ENCODE measurements at regions of chr15 and their contacts with region 1.

Region 1: GRCh38 chr15:65032801-65033537 is 3.5 kb upstream of the MTFMT start:
- DNase-seq: no peak
- ATAC-seq: peak; percentile 56

Region 2: GRCh38 chr15:65083262-65083701 is 50.3 kb after region 1 on chr15:
- intact Hi-C with region 1: loop called (anchors 2 kb)
- DNase-seq: no peak
- ATAC-seq: no peak

Region 3: GRCh38 chr15:65101411-65101890 is 68.5 kb after region 1 on chr15:
- intact Hi-C with region 1: loop called (anchors 5 kb)
- DNase-seq: no peak
- ATAC-seq: peak; percentile 60

Region 4: GRCh38 chr15:65298731-65299130 is 265.8 kb after region 1 on chr15:
- intact Hi-C with region 1: loop called (anchors 5 kb)
- DNase-seq: no peak
- ATAC-seq: no peak

Region 5: GRCh38 chr15:65326117-65326526 is 293.2 kb after region 1 on chr15:
- intact Hi-C with region 1: no loop called
- DNase-seq: peak; percentile 60
- ATAC-seq: no peak

Measured in Right ventricle myocardium inferior (tissue), 1 donor.